Naive thymus-derived CD8-positive, alpha-beta T cell (primary cell): ENCODE measurements at regions of chr14 and their contacts with region 1.

Region 1: GRCh38 chr14:65412032-65412846 is at the start of gene FUT8:
- DNase-seq: peak; percentile 88 to 99 (median 95)
- ATAC-seq: peak; percentile 89 to 90
- H3K4me3 Mint-ChIP-seq: peak within 1 kb of the TSS; percentile 90 to 100 (median 99)
- H3K27ac Mint-ChIP-seq: peak within 1 kb of the TSS; percentile 91 to 99 (median 98)
- H3K4me1 Mint-ChIP-seq: peaks cover 16 to 42% (median 36%) of the 10 kb centered on the region in 4 donors
- H3K27me3 Mint-ChIP-seq: no peaks in the 10 kb centered on the region
- polyA plus RNA-seq, gene FUT8: 10.0 to 15.2 (median 10.4) TPM

Region 2: DNA sequence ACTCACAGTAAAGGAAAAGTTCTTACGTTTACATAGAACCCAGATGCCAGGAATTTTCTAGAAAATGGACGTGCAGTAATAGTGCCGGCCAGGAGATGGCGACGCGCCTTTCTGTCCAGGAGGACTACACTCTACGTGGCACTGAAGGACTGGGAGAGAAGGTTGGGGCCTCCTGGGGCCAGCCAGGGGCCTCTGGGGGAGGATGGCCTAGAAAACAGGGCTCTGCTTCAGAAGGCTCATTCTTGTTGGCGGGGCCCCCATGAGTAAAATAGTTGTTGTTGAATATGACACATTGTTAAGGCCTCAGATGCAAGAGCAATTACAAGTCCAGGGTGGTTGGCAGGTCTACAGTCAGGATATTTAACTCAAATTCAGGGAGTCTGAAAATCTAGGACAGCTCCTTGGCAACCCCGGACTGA is 189.8 kb before region 1 on chr14:
- POLR2A ChIA-PET with region 1: interaction called, 11 read pairs
- DNase-seq: peak; percentile 7 to 71 (median 46)
- ATAC-seq: peak; percentile 71 to 82
- H3K4me3 Mint-ChIP-seq: peak overlapping the region in 1 of 10 donors; percentile 24
- H3K27ac Mint-ChIP-seq: peak overlapping the region in 2 of 10 donors; percentile 56 to 65
- H3K4me1 Mint-ChIP-seq: peaks cover 17 to 51% (median 36%) of the 10 kb centered on the region in 4 donors
- H3K27me3 Mint-ChIP-seq: no peaks in the 10 kb centered on the region

Region 3: DNA sequence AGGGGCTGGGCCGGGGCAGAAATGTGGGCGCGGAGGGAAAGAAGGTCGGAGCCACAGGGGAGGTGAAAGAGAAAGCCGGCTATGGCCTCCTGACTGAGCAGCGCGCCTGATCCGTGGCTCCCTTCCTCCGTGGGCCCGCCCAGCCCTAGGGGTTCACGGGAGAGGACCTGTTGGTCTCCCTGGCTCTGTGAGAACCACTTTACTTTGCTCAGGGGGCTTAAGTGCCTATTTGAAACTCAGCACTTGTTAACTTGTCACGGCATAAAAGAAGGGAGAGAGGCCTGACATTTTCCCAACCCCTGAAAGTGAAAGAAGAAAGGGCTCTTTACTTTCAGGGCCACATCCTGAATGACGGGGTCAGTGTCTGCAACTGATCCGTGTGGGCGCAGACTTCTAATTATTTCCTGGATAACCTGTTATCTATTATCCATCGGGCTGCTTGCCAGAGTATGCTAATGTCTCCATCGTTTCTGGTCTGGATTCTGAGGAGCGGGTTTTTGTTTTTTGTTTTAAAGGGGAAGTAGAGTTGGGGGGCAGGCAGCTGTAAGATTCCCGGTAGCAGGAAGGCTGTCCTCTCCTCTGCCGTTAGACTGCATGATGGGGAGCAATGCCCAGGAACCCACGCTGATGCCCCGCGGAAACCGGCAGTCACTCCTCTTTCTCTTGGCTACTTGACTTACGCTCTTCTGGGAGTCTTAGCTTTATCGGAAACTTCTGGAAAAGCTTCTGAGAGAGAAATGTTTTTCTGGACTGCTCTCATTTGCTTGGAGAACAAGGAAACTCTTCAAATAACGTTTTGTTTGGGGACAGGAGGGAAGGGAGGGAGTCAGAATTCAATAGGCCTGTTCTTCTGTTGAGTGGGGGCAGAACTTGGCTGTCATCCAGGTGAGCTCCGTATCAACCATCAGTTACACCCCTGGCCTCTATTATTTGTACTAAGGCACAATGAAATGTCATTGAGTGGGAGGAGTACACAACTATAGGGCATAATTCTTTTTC is 182.2 kb before region 1 on chr14:
- POLR2A ChIA-PET with region 1: interaction called, 10 read pairs
- DNase-seq: peak in 6 of 10 donors; percentile 17 to 44 (median 24)
- ATAC-seq: peak; percentile 85 to 93
- H3K4me3 Mint-ChIP-seq: peak overlapping the region; percentile 85 to 96 (median 92)
- H3K27ac Mint-ChIP-seq: peak overlapping the region; percentile 94 to 99 (median 96)
- H3K4me1 Mint-ChIP-seq: peaks cover 25 to 57% (median 49%) of the 10 kb centered on the region in 4 donors
- H3K27me3 Mint-ChIP-seq: no peaks in the 10 kb centered on the region

Region 4: DNA sequence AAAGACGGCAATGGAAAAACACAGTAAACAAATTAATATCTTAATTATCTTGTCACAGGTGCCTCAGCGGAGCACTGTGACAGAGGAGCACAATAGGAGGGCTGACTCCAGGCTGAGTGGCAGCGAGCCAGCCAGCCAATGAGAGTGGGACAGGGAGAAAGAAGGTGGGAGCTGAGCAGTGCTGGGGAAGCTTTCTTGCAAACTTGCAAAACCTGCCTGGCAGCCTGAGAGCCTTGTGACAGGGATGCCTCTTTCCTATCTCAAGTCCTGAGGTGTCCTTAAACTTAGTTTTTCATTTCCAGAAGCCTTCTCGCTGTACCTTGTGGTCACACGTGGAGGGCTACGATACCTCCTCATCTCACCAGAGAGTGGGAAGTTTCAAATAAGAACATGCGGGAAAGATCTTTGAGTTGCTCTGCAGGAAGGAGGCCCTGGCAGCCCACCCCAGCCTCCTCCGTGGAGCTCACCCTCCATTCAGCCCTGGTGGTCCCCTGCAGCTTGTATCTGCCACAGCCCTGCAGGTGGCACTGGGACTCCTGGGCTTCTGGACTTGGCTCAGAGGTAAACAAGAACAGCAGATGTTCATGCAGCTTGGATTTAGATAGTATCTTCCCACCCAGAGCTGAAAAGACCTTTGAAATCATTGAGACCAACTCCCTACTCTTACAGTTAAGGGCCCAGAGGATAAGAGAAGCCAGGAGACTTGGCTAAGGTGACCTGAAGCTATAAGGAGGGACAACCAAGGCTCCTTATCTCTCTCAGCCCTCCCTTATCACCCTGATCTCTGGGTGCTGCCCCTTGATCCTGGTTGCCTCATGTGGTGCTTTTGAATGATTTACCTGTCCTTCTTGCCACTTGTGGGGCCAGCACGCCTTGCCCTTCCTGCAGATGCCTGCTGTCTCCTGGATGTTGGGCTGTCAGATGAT is 156.4 kb before region 1 on chr14:
- POLR2A ChIA-PET with region 1: interaction called, 13 read pairs
- DNase-seq: peak in 8 of 10 donors; percentile 15 to 74 (median 22)
- ATAC-seq: peak; percentile 59 to 91
- H3K4me3 Mint-ChIP-seq: peak overlapping the region in 1 of 10 donors; percentile 42
- H3K27ac Mint-ChIP-seq: peak overlapping the region in 5 of 10 donors; percentile 0 to 52 (median 19)
- H3K4me1 Mint-ChIP-seq: peaks cover 30 to 43% (median 33%) of the 10 kb centered on the region in 4 donors
- H3K27me3 Mint-ChIP-seq: peaks cover 0 to 1% (median 0%) of the 10 kb centered on the region in 5 donors

Region 5: DNA sequence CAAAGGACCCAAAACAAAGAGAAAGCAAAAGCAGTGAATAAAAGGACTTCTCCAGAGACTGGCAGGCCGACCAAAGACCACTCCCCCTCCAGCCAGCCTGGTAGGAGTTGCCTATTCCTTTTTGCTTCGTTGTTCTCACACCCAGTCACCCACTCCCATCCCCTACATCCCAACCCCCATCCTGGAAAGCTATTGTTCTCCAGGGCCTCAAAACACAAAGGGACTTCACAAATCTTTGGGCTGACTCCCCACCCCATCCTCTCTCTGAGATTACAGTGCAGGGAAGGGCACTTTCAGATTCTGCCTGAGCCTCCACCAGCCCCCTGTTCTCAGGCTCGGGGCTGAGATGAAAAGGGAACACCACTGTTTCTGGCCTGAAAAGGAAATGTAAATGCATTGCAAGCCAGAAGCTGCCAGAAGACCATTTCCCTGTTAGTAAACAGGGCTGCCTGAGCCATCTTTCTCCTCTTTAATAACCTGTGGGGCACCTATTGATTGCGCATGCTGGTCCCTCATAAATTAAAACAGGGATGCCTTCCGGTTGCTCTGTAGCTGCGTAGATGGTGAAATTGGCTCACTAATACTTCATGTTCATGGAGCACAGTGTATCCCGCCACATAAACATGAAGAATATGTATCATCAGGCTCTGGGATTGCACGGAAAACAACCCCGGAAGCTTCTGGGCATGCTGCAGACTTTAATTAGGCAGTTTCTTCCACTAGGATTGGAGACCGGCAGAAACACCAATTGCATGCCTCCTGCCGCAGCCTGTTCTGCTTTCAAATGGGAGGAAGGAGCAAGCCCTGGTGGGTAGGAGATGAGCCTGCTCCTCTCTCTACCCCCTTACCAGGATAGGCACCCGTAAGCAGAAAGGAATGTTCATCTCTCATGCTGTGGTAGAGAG is 130.0 kb before region 1 on chr14:
- POLR2A ChIA-PET with region 1: interaction called, 145 read pairs
- DNase-seq: peak in 3 of 10 donors; percentile 6 to 40 (median 32)
- ATAC-seq: peak; percentile 66 to 74
- H3K4me3 Mint-ChIP-seq: peak overlapping the region; percentile 62 to 88 (median 84)
- H3K27ac Mint-ChIP-seq: peak overlapping the region; percentile 82 to 98 (median 94)
- H3K4me1 Mint-ChIP-seq: peaks cover 21 to 51% (median 41%) of the 10 kb centered on the region in 4 donors
- H3K27me3 Mint-ChIP-seq: no peaks in the 10 kb centered on the region

Region 6: DNA sequence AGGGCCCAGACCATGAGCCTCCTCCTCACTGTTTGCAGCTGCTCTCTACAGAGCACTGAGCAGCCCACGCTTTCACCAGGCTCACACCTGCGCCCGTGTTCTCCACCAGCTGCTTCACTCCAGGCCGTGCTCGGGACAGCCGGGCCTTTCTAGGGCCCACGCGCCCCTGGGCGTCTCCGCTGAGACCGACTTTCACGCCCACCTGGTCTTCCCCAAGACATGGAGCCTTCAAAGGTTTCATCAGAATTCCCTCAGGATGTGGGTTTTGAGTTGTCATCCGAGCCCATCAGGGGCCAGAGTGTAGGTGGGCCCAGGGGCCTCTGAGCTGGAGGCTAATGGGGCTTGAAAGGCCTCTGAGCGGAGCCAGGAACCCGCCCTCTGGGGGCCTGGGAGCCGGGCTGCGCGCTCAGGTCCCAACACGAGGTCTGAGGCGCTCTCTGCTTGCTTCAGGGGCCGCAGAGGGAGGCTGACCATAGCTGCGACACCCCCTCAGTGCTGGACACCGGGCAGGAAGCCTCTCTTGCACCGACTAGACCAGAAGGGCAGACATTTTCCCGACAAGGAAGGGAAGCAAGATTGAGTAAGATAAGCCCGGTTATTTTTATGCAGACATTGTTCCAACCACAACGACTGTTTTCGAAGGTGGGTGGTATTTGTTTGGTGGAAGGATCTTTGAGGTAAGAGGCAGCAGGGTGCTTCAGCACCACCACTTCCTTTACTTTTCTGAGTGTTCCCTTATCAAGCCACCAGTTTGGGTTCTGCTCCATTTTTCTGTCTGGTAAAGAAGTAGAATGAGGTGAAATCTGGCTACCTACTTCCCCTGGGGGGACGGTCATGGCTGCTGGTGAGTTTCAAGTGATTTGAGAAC is 124.7 kb before region 1 on chr14:
- POLR2A ChIA-PET with region 1: interaction called, 145 read pairs
- DNase-seq: peak; percentile 23 to 82 (median 54)
- ATAC-seq: peak; percentile 86 to 91
- H3K4me3 Mint-ChIP-seq: peak overlapping the region; percentile 70 to 91 (median 88)
- H3K27ac Mint-ChIP-seq: peak overlapping the region; percentile 95 to 100 (median 98)
- H3K4me1 Mint-ChIP-seq: peaks cover 32 to 81% (median 77%) of the 10 kb centered on the region in 4 donors
- H3K27me3 Mint-ChIP-seq: no peaks in the 10 kb centered on the region

Region 7: DNA sequence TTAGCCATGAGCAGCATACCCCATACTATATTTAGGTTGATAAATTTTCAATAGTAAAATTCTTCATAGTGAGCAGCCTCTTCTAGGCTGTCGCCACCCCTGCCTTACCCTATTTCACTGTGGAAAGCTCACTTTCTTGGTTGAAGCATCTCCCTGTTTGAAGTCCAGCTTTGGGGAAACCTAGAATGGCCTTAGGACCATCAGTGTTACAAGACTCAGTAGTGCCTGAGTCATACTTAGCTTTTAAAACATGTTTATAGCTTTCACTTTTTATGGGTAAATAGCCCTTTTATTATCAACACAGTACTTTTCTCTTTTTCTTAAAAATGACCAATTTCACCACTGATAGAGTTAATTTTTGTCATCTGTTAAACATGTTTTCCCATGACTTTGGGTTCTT is 37.4 kb after region 1 on chr14:
- POLR2A ChIA-PET with region 1: no interaction called
- DNase-seq: no peak
- ATAC-seq: no peak
- H3K4me3 Mint-ChIP-seq: no peak overlapping the region
- H3K27ac Mint-ChIP-seq: peak overlapping the region in 2 of 10 donors; percentile 41 to 85
- H3K4me1 Mint-ChIP-seq: peaks cover 25 to 68% (median 45%) of the 10 kb centered on the region in 4 donors
- H3K27me3 Mint-ChIP-seq: no peaks in the 10 kb centered on the region